Activated T-helper 2 cell treated with anti-CD3 and anti-CD28 coated beads, Interferon-gamma antibody, Interleukin-2, Interleukin-4, amounts not matched to agents 10 μg/mL and 5 μg/mL and 100 μg/mL, durations not matched to agents 14 hours and 24 hours and 36 hours (primary cell): ENCODE measurements at regions of chr13 and their contacts with region 1.

Region 1: GRCh38 chr13:44577236-44578066 is 1.3 kb upstream of the TSC22D1 start:
- DNase-seq: peak; percentile 91
- H3K4me3 Mint-ChIP-seq: peak overlapping the region; percentile 88
- H3K27ac Mint-ChIP-seq: peak overlapping the region; percentile 79
- H3K4me1 Mint-ChIP-seq: peaks cover 18% of the 10 kb centered on the region
- H3K27me3 Mint-ChIP-seq: peaks cover 44% of the 10 kb centered on the region

Region 2: DNA sequence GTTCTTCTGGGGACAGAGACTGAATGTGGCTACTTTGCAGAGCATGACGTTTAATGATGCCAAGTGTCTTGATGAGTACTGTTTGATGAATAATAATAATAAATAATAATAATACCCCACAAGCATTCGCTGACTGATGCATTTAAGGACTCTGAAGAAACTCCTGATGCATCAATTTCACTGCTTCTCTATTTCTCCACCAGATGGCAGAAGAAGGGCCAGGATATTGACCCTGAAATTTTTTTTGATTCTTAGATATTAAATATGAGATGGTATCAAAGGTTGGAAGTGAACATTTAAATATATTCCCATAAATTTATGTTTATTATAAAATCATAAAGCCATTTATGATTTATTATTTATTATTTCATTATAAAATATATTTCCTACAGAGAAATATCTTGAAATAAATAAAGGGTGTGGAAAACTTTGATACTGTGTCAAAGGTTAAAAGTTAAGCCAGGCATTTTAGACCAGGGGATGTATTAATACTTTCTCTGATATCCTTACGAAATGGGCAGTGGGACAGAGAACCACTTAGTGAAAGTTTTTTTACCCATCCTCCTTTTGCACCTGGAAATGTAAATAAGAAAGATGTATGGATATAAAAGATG is 526.9 kb before region 1 on chr13:
- intact Hi-C with region 1: no loop called
- DNase-seq: no peak
- H3K4me3 Mint-ChIP-seq: no peak overlapping the region
- H3K27ac Mint-ChIP-seq: no peak overlapping the region
- H3K4me1 Mint-ChIP-seq: peaks cover 2% of the 10 kb centered on the region
- H3K27me3 Mint-ChIP-seq: peaks cover 29% of the 10 kb centered on the region

Region 3: DNA sequence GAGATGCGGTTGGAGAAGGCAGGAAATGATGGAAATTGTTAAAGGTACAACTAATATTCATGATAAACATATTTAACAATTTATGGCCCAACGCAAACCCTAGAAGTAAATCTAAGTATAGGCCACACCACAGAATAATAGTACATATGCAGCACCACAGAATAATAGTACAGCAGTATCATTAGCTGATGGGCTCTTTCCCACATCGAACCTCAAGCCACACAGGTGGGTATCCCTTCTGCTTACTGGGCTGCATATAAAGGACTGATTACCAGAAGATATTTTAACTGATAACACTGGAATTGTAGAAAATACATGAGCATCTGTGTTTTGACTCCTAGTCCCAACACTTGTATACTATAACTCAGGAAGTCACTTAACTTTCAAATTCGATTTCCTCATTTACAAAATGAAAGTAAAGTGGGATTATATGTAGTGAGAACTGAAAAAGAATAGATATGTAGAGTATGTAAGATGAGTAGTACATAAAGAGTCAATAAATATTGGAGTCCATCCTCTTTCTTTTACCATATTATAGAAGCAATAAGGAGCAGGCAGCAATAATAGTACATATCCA is 92.8 kb before region 1 on chr13:
- intact Hi-C with region 1: loop called (anchors 5 kb)
- DNase-seq: no peak
- H3K4me3 Mint-ChIP-seq: no peak overlapping the region
- H3K27ac Mint-ChIP-seq: no peak overlapping the region
- H3K4me1 Mint-ChIP-seq: peaks cover 11% of the 10 kb centered on the region
- H3K27me3 Mint-ChIP-seq: peaks cover 6% of the 10 kb centered on the region

Region 4: GRCh38 chr13:44643256-44643655 is 65.8 kb after region 1 on chr13:
- intact Hi-C with region 1: no loop called
- DNase-seq: no peak
- H3K4me3 Mint-ChIP-seq: no peak overlapping the region
- H3K27ac Mint-ChIP-seq: no peak overlapping the region
- H3K4me1 Mint-ChIP-seq: peaks cover 3% of the 10 kb centered on the region
- H3K27me3 Mint-ChIP-seq: peaks cover 4% of the 10 kb centered on the region

Region 5: DNA sequence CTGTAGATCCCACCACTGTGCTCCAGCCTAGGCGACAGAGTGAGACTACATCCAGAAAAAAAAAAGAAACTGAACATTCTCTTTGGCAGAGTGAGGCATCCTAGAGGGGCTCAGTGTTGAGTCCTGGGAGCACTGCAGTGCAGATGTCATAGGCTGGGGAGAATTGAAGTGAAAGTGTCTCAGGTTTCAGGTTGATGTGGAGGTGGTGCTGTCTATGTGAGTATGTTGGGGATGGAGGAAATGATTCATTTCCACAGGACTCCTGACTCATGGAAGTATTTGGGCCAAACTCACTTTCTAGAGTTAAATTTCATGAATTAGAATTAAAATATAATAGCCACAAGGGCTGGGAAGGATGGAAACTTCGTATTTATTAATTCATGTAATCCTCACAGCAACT is 133.1 kb after region 1 on chr13:
- intact Hi-C with region 1: loop called (anchors 2 kb)
- DNase-seq: no peak
- H3K4me3 Mint-ChIP-seq: no peak overlapping the region
- H3K27ac Mint-ChIP-seq: no peak overlapping the region
- H3K4me1 Mint-ChIP-seq: peaks cover 8% of the 10 kb centered on the region
- H3K27me3 Mint-ChIP-seq: peaks cover 15% of the 10 kb centered on the region

Region 6: DNA sequence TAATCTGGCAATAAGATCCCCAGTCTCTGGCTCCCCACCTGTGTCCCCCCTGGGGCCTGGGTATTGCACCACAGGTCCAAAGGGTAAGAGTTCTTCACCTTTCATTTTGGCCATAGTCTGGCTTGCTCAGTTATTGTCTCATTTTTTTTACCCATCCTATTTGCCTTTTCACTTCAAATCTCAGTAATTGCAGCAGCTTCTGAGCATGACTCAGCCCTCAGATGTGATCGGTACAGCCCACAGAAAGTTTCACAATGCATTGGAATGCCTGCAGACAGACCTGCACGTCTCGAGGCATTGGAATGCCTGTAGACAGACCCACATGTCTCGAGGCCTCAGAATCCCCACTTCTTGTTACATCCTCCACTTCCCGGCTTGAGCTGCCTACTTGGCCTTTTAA is 238.2 kb after region 1 on chr13:
- intact Hi-C with region 1: loop called (anchors 5 kb)
- DNase-seq: peak; percentile 10
- H3K4me3 Mint-ChIP-seq: no peak overlapping the region
- H3K27ac Mint-ChIP-seq: no peak overlapping the region
- H3K4me1 Mint-ChIP-seq: peaks cover 26% of the 10 kb centered on the region
- H3K27me3 Mint-ChIP-seq: peaks cover 45% of the 10 kb centered on the region

Region 7: DNA sequence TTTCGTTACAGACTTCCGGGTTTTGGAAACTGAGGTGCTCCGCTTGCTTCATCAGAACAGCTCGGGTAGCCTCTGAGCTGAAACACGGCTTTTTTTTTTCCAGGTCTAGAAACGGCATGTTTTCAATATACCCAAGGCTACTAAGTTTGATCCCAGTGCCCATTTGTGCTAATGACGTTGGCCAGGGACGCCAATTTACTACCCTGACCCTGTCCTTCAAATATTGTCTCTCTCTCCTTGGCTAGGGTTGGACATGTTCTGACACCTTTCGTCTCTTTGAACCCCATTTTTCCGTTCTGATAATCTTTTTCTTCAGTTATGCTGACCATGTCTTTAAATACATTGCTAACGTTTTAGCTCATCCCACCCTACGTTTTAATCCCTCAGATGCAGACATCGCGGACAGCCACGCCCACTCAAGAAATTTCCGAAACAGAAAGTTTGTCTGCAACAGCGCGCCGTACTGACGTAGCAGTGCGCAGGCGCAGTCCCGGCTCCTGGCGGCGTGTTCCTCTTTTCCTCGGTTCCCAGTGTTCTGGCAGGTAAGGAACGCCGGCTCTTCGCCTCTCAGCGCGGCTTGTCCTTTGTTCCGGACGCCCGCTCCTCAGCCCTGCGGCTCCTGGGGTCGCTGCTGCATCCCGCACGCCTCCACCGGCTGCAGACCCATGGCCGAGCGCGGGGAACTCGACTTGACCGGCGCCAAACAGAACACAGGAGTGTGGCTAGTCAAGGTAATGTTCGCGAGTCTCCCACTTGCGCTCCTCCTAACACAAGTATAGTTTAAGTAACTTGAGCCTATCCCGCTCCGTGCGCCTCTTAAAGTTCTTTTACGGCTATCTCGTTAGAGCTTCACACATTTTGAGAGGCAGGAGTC is 542.8 kb after region 1 on chr13 and contains the start of gene GTF2F2:
- intact Hi-C with region 1: loop called (anchors 2 kb)
- DNase-seq: peak; percentile 84
- H3K4me3 Mint-ChIP-seq: no peak within 1 kb of the TSS
- H3K27ac Mint-ChIP-seq: no peak within 1 kb of the TSS
- H3K4me1 Mint-ChIP-seq: peaks cover 8% of the 10 kb centered on the region
- H3K27me3 Mint-ChIP-seq: no peaks in the 10 kb centered on the region
- total RNA-seq, gene GTF2F2: 26.9 and 28.9 TPM in 2 replicates